AG04449 (cell line): ENCODE measurements at regions of chr16 and their contacts with region 1.

Region 1: DNA sequence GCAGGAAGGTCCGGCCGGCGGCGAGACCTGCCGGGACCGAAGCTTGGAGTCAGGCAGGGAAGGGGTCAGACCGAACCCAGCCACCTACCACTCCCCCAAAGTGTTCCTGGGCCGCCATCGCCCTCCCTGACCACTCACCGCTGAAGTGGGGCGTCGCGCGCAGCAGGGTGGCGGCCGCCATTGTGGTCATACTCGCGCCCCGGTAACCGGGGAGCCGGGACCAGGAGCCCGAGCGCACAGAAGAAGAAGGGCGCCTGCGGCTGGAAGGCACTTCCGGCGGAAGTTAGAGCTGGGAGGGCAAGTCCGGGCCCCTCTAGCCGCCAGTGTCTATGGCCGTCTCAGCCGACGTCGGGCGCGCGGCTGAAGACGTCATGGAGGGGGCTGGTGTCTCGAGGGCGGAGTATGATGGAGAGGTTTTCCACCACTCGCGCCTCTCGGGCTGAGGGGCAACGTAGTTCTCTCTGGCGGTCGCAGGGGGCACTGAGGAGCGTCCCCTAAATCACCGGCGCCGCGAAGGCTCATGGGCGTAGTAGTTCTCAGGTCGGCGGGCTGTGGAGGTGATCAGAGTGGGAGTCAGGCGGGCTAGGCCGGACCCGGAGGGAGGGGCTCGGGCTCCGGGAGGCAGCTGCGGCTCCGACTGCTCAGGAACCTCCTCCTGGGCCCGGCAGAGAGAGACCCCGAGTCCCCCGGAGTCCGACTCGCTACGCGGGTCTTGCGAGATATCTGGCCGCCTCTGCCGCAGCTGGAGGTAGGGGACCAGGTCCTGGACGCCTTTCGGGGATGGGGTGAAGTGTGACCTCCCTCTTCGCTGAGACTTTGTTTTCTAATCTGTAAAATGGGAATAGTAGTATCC is at the start of gene TUFM:
- DNase-seq: peak; percentile 83
- H3K4me3 ChIP-seq: peak within 1 kb of the TSS; percentile 93
- CTCF ChIP-seq: peak; percentile 83

Region 2: GRCh38 chr16:28823872-28824716 is 22.2 kb before region 1 on chr16:
- CTCF ChIA-PET with region 1: interaction called, 17 read pairs
- POLR2A ChIA-PET with region 1: interaction called, 16 read pairs
- DNase-seq: peak; percentile 90
- H3K4me3 ChIP-seq: peak overlapping the region; percentile 97
- CTCF ChIP-seq: peak; percentile 36

Region 3: DNA sequence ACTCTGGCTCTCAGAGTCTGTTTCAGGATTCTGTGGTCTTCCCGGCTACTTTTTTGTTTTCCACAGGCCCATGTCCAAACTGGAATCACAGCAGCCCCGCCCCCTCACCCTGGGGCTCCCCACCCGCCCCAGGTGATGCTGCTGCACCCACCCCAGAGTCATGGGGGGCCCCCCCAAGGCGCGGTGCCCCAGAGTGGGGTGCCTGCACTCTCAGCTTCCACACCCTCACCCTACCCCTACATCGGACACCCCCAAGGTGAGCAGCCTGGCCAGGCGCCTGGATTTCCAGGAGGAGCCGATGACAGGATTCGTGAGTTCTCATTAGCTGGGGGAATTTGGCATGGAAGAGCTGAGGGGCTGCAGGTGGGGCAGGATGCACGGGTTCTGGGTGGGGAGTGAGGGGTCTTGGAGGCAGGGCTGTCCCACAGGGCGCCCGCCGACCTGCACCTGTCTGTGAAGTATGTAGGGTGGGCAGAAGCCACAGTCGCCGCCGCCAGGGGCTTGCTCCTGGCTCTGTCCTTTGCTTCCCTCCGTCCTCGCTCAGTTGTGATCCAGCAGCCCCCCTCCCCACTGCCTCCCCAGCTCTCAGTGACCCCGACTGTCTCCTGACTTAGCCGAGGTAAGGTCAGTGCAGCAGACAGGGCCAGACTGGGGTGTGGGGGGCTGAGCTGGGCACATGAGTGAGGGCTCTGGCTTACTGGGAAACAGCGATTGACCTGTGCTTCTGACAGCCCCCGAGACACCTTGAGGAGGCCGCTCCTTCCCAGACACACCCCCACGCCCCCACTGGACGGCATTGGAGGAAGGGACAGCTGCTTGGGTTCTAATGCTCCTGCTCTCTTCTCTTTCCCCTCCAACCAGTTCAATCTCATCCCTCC is 10.2 kb before region 1 on chr16:
- CTCF ChIA-PET with region 1: interaction called, 4 read pairs
- POLR2A ChIA-PET with region 1: interaction called, 10 read pairs
- DNase-seq: no peak
- H3K4me3 ChIP-seq: no peak overlapping the region
- CTCF ChIP-seq: no peak

Region 4: GRCh38 chr16:28863929-28864793 is 17.9 kb after region 1 on chr16:
- CTCF ChIA-PET with region 1: interaction called, 29 read pairs
- POLR2A ChIA-PET with region 1: interaction called, 17 read pairs
- DNase-seq: no peak
- H3K4me3 ChIP-seq: peak overlapping the region; percentile 88
- CTCF ChIP-seq: no peak

Region 5: GRCh38 chr16:28891964-28892890 is 45.9 kb after region 1 on chr16:
- CTCF ChIA-PET with region 1: no interaction called
- POLR2A ChIA-PET with region 1: no interaction called
- DNase-seq: no peak
- H3K4me3 ChIP-seq: no peak overlapping the region
- CTCF ChIP-seq: no peak

Region 6: GRCh38 chr16:28905800-28906372 is 59.6 kb after region 1 on chr16:
- CTCF ChIA-PET with region 1: no interaction called
- POLR2A ChIA-PET with region 1: no interaction called
- DNase-seq: no peak
- H3K4me3 ChIP-seq: no peak overlapping the region
- CTCF ChIP-seq: no peak

Region 7: GRCh38 chr16:28950648-28951409 is 104.5 kb after region 1 on chr16 and contains the start of gene NFATC2IP:
- CTCF ChIA-PET with region 1: interaction called, 23 read pairs
- POLR2A ChIA-PET with region 1: no interaction called
- DNase-seq: peak; percentile 99
- H3K4me3 ChIP-seq: peak within 1 kb of the TSS; percentile 79
- CTCF ChIP-seq: no peak